ENCODE measurements at regions of chr3 and their contacts with region 1.

Region 1: GRCh38 chr3:10703875-10704274 is 112.2 kb upstream of the SLC6A11 start:
- DNase-seq: peak; percentile 12
- ATAC-seq: peak; percentile 56
- H3K4me3 Mint-ChIP-seq: no peak overlapping the region
- H3K27ac Mint-ChIP-seq: no peak overlapping the region
- H3K4me1 Mint-ChIP-seq: peaks cover 3% of the 10 kb centered on the region
- H3K27me3 Mint-ChIP-seq: peaks cover 69% of the 10 kb centered on the region
- CTCF ChIP-seq: peak; percentile 36

Region 2: GRCh38 chr3:10344147-10344943 is 359.5 kb before region 1 on chr3:
- CTCF ChIA-PET with region 1: no interaction called
- POLR2A ChIA-PET with region 1: interaction called, 3 read pairs
- intact Hi-C with region 1: loop called (anchors 10 kb)
- DNase-seq: peak; percentile 68
- ATAC-seq: peak; percentile 73
- H3K4me3 Mint-ChIP-seq: no peak overlapping the region
- H3K27ac Mint-ChIP-seq: no peak overlapping the region
- H3K4me1 Mint-ChIP-seq: no peaks in the 10 kb centered on the region
- H3K27me3 Mint-ChIP-seq: no peaks in the 10 kb centered on the region
- CTCF ChIP-seq: peak; percentile 95